ENCODE measurements at regions of chr12 and their contacts with region 1.

Region 1: DNA sequence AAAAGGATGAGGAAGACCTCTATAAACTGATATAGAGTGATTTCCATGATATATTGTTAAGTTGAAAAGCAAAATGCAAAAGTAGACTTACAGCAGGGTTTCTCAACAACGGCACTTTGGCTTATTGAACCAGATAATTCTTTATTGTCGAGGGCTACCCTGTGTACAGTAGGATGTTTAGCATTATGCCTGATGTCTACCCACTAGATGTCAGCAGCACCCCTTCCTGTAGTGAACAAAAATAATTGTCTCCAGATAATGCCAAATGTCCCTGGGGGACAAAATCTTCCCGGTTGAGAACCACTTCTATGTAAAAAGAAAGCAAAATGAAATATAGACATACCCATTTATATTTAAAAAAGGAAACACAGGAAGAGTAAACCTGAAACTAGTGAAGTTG is 32.4 kb downstream of the ABCD2 start:
- DNase-seq: no peak
- H3K4me3 Mint-ChIP-seq: no peak overlapping the region
- H3K27ac Mint-ChIP-seq: no peak overlapping the region
- H3K4me1 Mint-ChIP-seq: peaks cover 16% of the 10 kb centered on the region
- H3K27me3 Mint-ChIP-seq: no peaks in the 10 kb centered on the region

Region 2: GRCh38 chr12:39632670-39633069 is 45.4 kb after region 1 on chr12:
- intact Hi-C with region 1: no loop called
- DNase-seq: no peak
- H3K4me3 Mint-ChIP-seq: no peak overlapping the region
- H3K27ac Mint-ChIP-seq: no peak overlapping the region
- H3K4me1 Mint-ChIP-seq: peaks cover 30% of the 10 kb centered on the region
- H3K27me3 Mint-ChIP-seq: no peaks in the 10 kb centered on the region

Region 3: GRCh38 chr12:39692258-39692853 is 105.1 kb after region 1 on chr12:
- intact Hi-C with region 1: loop called (anchors 1 kb)
- DNase-seq: no peak
- H3K4me3 Mint-ChIP-seq: no peak overlapping the region
- H3K27ac Mint-ChIP-seq: no peak overlapping the region
- H3K4me1 Mint-ChIP-seq: peaks cover 2% of the 10 kb centered on the region
- H3K27me3 Mint-ChIP-seq: peaks cover 4% of the 10 kb centered on the region

Region 4: GRCh38 chr12:39752482-39753147 is 165.4 kb after region 1 on chr12:
- intact Hi-C with region 1: no loop called
- DNase-seq: no peak
- H3K4me3 Mint-ChIP-seq: no peak overlapping the region
- H3K27ac Mint-ChIP-seq: no peak overlapping the region
- H3K4me1 Mint-ChIP-seq: no peaks in the 10 kb centered on the region
- H3K27me3 Mint-ChIP-seq: peaks cover 1% of the 10 kb centered on the region

Region 5: GRCh38 chr12:39990122-39991101 is 403.2 kb after region 1 on chr12:
- intact Hi-C with region 1: loop called (anchors 1 kb)
- DNase-seq: peak; percentile 13
- H3K4me3 Mint-ChIP-seq: no peak overlapping the region
- H3K27ac Mint-ChIP-seq: no peak overlapping the region
- H3K4me1 Mint-ChIP-seq: no peaks in the 10 kb centered on the region
- H3K27me3 Mint-ChIP-seq: peaks cover 2% of the 10 kb centered on the region